Activated CD4-positive, alpha-beta memory T cell treated with anti-CD3 and anti-CD28 coated beads for 36 hours (primary cell): ENCODE measurements at regions of chr1 and their contacts with region 1.

Region 1: GRCh38 chr1:204431310-204432165 is 19.9 kb upstream of the PPP1R15B start:
- DNase-seq: peak; percentile 87
- H3K4me3 Mint-ChIP-seq: no peak overlapping the region
- H3K27ac Mint-ChIP-seq: no peak overlapping the region
- H3K4me1 Mint-ChIP-seq: peaks cover 8% of the 10 kb centered on the region
- H3K27me3 Mint-ChIP-seq: no peaks in the 10 kb centered on the region

Region 2: GRCh38 chr1:204350857-204351573 is 80.5 kb before region 1 on chr1:
- CTCF ChIA-PET with region 1: no interaction called
- POLR2A ChIA-PET with region 1: no interaction called
- intact Hi-C with region 1: no loop called
- DNase-seq: no peak
- H3K4me3 Mint-ChIP-seq: no peak overlapping the region
- H3K27ac Mint-ChIP-seq: no peak overlapping the region
- H3K4me1 Mint-ChIP-seq: peaks cover 3% of the 10 kb centered on the region
- H3K27me3 Mint-ChIP-seq: peaks cover 2% of the 10 kb centered on the region

Region 3: DNA sequence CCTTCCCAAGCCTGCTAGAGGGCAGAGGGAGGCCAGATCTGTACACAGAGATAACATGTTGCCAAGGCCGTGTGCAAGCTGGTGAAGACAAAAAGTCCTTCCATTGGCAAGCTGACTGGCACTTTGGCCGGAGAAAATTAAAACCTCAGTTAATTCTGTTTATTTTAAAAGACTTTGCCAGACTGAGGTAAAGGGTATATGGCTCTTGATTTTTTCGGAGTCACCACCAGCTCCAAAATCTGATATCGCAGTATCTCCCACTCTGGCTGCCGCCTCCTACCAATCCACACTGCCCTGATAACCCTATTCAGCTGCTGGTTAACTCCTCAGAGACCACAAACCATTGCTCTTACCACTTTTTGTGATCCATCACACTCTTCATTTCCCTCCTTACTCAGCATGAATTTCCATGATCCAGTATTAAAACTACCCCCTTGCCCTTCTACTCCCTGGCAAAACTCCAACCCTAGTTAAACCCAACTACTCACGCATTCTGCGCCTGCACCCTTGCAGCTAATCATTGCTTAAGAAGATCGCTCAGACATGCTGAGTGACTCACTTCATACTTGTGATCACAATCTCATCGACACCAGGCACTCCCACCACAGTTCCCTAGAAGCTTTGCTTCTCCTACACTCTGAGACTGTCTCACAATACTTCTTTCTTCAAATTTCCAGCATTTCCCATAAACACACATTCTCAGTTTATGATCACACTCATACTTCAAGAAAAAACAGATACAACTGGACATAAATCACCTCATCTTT is 14.1 kb before region 1 on chr1:
- CTCF ChIA-PET with region 1: interaction called, 25 read pairs
- POLR2A ChIA-PET with region 1: interaction called, 3 read pairs
- intact Hi-C with region 1: no loop called
- DNase-seq: peak; percentile 58
- H3K4me3 Mint-ChIP-seq: no peak overlapping the region
- H3K27ac Mint-ChIP-seq: peak overlapping the region; percentile 31
- H3K4me1 Mint-ChIP-seq: peaks cover 33% of the 10 kb centered on the region
- H3K27me3 Mint-ChIP-seq: no peaks in the 10 kb centered on the region

Region 4: DNA sequence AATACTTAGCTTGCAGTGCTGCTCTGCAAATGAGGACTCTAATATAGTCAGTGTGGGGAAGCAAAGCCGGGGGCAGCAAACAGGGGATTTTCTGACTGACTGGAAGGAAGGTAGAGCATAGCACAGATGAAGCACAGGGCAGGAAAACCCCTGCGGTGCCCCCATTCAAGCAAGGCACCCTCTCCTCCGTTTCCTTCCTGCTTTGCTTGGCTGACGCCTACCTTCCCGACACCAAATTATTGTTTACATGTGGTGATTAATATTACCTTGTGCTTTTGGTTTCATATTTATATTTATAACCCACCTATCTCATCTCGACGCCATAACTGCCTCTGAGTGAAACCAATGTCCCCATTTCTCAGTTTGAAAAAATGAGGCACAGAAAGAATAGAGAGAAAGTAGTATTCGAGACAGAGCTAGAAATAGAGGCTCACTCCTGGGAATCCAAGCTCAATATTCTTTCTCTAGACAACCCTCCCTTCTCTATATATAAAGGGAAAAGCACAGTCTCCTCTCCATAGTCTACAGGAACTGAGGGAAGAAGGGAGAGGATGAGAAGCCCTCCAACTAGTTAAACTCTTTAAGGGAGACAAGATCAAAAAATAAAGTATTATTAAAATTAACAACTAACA is 21.7 kb after region 1 on chr1:
- CTCF ChIA-PET with region 1: interaction called, 194 read pairs
- POLR2A ChIA-PET with region 1: interaction called, 3 read pairs
- intact Hi-C with region 1: loop called (anchors 2 kb)
- DNase-seq: peak; percentile 89
- H3K4me3 Mint-ChIP-seq: peak overlapping the region; percentile 65
- H3K27ac Mint-ChIP-seq: peak overlapping the region; percentile 88
- H3K4me1 Mint-ChIP-seq: peaks cover 48% of the 10 kb centered on the region
- H3K27me3 Mint-ChIP-seq: no peaks in the 10 kb centered on the region

Region 5: DNA sequence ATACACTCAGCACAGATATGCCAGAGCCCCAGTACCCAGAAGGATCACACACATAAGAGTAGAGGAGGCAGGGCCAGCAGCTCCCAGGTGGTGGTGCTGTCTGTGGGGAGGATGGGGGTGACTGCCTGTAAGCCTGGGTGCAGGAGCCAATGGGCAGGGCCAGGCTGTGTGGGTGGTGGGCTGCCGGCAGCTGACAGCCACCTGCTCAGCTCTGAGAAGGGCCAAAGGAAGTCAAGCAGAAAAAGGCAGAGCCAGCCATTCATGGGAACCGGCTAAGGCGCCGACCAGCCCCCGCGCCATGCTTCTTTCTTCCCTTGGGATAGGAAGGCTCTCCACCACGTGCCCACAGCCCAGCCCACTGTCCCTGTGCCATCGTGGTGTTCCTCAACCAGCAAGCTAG is 49.0 kb after region 1 on chr1:
- CTCF ChIA-PET with region 1: interaction called, 28 read pairs
- POLR2A ChIA-PET with region 1: interaction called, 3 read pairs
- intact Hi-C with region 1: no loop called
- DNase-seq: no peak
- H3K4me3 Mint-ChIP-seq: no peak overlapping the region
- H3K27ac Mint-ChIP-seq: no peak overlapping the region
- H3K4me1 Mint-ChIP-seq: peaks cover 65% of the 10 kb centered on the region
- H3K27me3 Mint-ChIP-seq: no peaks in the 10 kb centered on the region

Region 6: DNA sequence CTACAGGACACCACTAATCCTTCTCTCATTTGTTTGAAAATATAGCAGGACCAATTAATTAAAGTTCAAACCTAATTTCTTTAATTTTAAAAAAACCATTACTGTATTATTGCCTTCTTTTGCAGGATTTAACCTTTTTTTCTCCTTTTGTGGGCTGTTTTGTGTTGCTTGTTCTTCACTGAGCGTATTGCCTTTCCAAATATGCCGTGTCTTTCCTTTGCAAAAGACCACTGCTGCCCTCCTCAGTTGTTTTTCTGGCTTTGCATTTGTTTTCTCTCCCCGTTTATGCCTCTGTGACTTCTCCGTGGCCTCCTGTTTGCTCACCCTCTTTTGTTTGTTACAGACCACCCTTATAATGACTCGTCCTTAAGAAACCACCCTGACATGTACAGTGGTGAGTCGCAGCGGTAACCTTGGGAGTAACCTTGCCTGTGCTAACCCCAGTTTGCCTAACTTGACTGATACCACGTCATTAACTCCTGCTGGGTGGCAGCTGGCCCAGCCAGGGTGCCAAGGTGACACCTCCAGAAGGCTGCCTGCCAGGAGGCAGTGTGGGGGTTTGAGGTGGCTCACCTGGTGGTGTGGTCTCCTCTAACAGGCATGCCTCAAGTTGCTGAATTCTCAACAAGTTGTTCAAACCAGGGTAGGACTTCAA is 530.4 kb after region 1 on chr1:
- CTCF ChIA-PET with region 1: no interaction called
- POLR2A ChIA-PET with region 1: no interaction called
- intact Hi-C with region 1: no loop called
- DNase-seq: no peak
- H3K4me3 Mint-ChIP-seq: no peak overlapping the region
- H3K27ac Mint-ChIP-seq: no peak overlapping the region
- H3K4me1 Mint-ChIP-seq: no peaks in the 10 kb centered on the region
- H3K27me3 Mint-ChIP-seq: peaks cover 19% of the 10 kb centered on the region